ENCODE measurements at regions of chr7 and their contacts with region 1.

Region 1: DNA sequence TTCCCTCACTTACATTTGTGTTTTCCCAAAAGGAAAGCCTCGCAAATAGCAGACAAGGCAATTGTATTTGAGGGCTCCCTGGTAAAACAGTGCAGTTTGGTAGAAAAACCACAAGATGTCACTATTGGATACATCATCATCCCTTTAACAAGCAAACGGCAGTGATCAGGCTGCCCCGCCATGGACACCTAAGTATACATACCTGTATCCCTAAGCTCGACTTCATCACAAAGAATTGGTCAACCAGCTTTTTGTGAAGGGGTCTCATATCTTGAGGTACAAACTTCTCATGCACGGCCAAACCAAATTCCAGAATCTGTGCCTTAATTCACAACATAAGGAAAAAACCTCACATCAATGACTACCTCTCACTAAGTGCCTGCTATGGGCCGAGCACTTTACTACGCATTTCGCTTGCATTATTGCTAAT is 179.5 kb upstream of the IMMP2L start:
- DNase-seq: no peak
- H3K4me3 ChIP-seq: no peak overlapping the region
- CTCF ChIP-seq: no peak
- POLR2A ChIP-seq: no peak

Region 2: DNA sequence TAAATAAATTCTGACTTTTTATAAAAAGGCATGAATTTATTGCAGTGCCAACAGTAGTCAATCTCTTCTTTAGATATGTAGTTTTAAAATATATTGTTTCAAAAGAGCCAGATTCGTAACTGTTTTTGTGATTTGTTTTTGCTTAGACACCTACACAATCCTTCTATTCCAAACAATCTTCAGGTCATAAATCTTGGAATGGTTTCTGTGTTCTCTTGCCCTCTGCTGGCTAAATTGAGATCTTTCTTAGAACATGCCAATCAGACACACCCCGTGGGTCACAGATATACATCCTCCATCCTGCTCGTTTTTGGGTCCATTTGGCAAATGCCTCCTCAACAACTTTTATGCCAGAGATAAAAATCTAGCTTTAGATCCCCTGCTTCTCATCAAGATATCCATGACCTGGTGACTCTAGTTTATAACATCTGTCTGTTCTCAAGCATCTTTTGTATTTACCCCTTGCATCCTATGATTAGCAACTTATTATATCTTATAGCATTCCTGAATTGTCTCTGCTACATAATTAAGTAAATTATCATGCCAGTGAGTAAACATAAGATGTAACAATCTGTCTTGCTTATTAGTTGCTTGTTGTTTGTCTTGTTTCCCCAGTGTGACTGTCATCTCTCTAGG is 673.1 kb after region 1 on chr7:
- intact Hi-C with region 1: loop called (anchors 10 kb)
- DNase-seq: no peak
- H3K4me3 ChIP-seq: no peak overlapping the region
- CTCF ChIP-seq: no peak
- POLR2A ChIP-seq: no peak

Region 3: GRCh38 chr7:112495810-112496462 is 754.1 kb after region 1 on chr7:
- intact Hi-C with region 1: loop called (anchors 10 kb)
- DNase-seq: peak in 1 of 2 donors; percentile 70
- H3K4me3 ChIP-seq: no peak overlapping the region
- CTCF ChIP-seq: peak in 1 of 3 donors; percentile 52
- POLR2A ChIP-seq: no peak